CD4-positive, alpha-beta T cell (primary cell): ENCODE measurements at regions of chr12 and their contacts with region 1.

Region 1: GRCh38 chr12:93502802-93503623 is 35.7 kb downstream of the MRPL42 start:
- DNase-seq: peak; percentile 36 to 79 (median 59)
- ATAC-seq: peak; percentile 29
- H3K4me3 ChIP-seq: no peak overlapping the region
- H3K4me3 Mint-ChIP-seq: no peak overlapping the region
- H3K27ac ChIP-seq: no peak overlapping the region
- H3K27ac Mint-ChIP-seq: no peak overlapping the region
- H3K4me1 ChIP-seq: no peaks in the 10 kb centered on the region
- H3K4me1 Mint-ChIP-seq: no peaks in the 10 kb centered on the region
- H3K27me3 ChIP-seq: no peaks in the 10 kb centered on the region
- H3K27me3 Mint-ChIP-seq: no peaks in the 10 kb centered on the region
- CTCF ChIP-seq: peak; percentile 91

Region 2: GRCh38 chr12:92987362-92987761 is 515.7 kb before region 1 on chr12:
- CTCF ChIA-PET with region 1: no interaction called
- POLR2A ChIA-PET with region 1: no interaction called
- intact Hi-C with region 1: loop called in 1 of 2 experiments (anchors 5 kb)
- DNase-seq: peak in 4 of 14 experiments; percentile 13 to 73 (median 70)
- ATAC-seq: peak; percentile 81
- H3K4me3 ChIP-seq: no peak overlapping the region
- H3K4me3 Mint-ChIP-seq: peak overlapping the region; percentile 26
- H3K27ac ChIP-seq: no peak overlapping the region
- H3K27ac Mint-ChIP-seq: no peak overlapping the region
- H3K4me1 ChIP-seq: peaks cover 7% of the 10 kb centered on the region
- H3K4me1 Mint-ChIP-seq: peaks cover 12% of the 10 kb centered on the region
- H3K27me3 ChIP-seq: no peaks in the 10 kb centered on the region
- H3K27me3 Mint-ChIP-seq: no peaks in the 10 kb centered on the region
- CTCF ChIP-seq: peak; percentile 80

Region 3: DNA sequence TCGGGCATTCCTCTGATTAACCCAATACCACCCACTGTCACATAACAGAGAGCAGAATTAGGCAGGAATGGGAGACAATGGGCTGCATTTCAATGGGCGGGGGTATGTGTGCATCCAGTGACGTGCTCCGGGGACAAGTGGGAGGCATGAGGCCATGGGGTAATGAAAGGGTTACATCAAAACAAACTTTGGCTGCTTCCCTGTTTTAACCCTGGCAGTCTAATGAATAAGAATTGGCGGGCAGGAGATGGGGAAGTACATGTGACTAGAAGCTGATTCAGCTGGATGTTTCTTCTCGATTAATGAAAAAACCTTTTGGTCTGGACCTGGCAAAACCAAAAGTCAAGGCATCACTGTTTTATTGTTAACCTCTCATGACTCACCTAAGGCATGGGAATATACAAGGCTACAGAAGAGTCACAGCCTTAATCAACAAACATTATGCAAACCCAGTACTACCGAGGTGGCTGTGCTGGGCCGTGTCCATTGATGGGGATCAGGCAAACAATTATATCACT is 113.6 kb after region 1 on chr12:
- CTCF ChIA-PET with region 1: no interaction called
- POLR2A ChIA-PET with region 1: no interaction called
- intact Hi-C with region 1: no loop called
- DNase-seq: peak in 1 of 14 experiments; percentile 7
- ATAC-seq: no peak
- H3K4me3 ChIP-seq: no peak overlapping the region
- H3K4me3 Mint-ChIP-seq: no peak overlapping the region
- H3K27ac ChIP-seq: no peak overlapping the region
- H3K27ac Mint-ChIP-seq: no peak overlapping the region
- H3K4me1 ChIP-seq: no peaks in the 10 kb centered on the region
- H3K4me1 Mint-ChIP-seq: no peaks in the 10 kb centered on the region
- H3K27me3 ChIP-seq: peaks cover 0 to 5% of the 10 kb centered on the region in 2 experiments
- H3K27me3 Mint-ChIP-seq: no peaks in the 10 kb centered on the region
- CTCF ChIP-seq: no peak

Region 4: DNA sequence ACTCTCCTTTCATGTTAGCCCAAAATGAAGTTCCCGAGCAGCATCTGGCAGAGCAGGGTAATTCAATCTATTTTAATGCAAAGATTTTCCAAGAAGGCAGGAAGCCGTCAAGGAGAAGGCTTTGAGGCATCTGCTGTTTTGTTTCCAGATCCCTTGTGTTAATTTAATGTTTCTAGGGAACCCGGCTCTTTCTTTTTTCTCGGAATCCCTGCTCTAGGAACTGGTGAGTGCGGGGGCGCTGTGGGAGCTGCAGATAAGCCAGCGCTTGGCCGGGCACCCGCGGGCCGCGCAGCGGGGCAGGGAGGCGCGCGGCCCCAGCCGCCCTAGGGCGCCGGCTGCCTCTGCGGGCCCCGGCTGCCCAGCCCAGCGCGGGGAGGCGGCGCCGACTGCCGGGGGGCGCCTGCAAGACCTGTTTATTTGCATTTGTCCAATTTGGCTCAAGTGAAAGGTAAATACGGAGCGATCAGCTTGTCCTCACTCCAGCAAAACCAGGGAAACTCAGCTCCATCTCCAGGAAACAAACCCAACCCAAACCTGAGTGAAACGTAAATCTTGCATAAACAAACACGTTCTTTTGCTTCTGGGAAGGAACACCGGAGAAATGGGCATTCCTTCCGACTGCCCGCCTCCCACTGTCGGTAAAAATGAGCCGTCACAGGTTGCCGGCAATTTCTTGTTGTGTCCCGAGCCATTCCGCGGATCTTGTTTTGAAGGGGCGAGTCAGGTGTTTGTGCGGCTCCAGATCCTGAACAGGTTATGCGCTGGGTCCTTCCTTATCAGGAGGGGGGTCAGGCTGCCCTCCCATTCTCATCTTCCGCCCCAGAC is 239.3 kb after region 1 on chr12:
- CTCF ChIA-PET with region 1: interaction called, 3 read pairs
- POLR2A ChIA-PET with region 1: no interaction called
- intact Hi-C with region 1: loop called in 1 of 2 experiments (anchors 5 kb)
- DNase-seq: peak in 13 of 14 experiments; percentile 5 to 79 (median 41)
- ATAC-seq: peak; percentile 87
- H3K4me3 ChIP-seq: peak overlapping the region; percentile 75
- H3K4me3 Mint-ChIP-seq: peak overlapping the region; percentile 93
- H3K27ac ChIP-seq: peak overlapping the region in 1 of 2 donors; percentile 49
- H3K27ac Mint-ChIP-seq: peak overlapping the region; percentile 71
- H3K4me1 ChIP-seq: peaks cover 10% of the 10 kb centered on the region
- H3K4me1 Mint-ChIP-seq: peaks cover 33% of the 10 kb centered on the region
- H3K27me3 ChIP-seq: no peaks in the 10 kb centered on the region
- H3K27me3 Mint-ChIP-seq: no peaks in the 10 kb centered on the region
- CTCF ChIP-seq: no peak

Region 5: DNA sequence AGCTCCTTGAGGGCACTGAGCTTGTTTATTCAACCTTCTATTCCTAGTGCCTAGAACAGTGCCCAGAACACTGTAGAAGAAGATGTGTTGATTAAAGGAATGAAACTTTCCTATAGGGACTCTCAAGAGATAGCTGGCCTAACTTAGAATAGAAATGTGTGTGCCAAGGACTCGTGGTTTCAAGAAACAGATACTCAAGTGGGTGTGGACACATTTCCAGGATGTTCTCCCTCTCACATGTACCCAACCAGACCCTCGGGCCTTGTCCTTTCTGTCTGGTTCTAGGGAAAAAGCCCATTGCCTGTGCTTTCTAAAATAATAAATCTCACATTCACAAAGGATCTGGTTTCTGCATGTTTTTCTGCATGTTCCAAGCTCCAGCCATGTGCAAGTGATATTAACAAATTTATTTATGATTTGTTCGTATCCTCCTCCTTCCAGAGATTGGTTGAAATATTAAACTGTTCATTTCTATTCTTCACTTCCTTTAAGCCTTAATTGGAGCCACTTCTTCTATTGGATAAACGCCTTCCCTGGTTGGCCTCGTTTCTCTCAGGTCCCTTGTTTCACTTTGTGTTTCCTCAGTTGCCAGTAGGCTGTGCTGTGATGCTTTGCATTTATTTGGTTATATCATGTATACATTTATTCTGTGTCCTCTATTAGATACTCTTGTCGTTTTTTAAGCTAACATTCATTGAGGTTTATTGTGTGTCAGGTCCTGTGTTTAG is 263.9 kb after region 1 on chr12:
- CTCF ChIA-PET with region 1: interaction called, 10 read pairs
- POLR2A ChIA-PET with region 1: no interaction called
- intact Hi-C with region 1: loop called in 1 of 2 experiments (anchors 2 kb)
- DNase-seq: peak in 9 of 14 experiments; percentile 9 to 68 (median 23)
- ATAC-seq: peak; percentile 63
- H3K4me3 ChIP-seq: no peak overlapping the region
- H3K4me3 Mint-ChIP-seq: no peak overlapping the region
- H3K27ac ChIP-seq: no peak overlapping the region
- H3K27ac Mint-ChIP-seq: no peak overlapping the region
- H3K4me1 ChIP-seq: peaks cover 2% of the 10 kb centered on the region
- H3K4me1 Mint-ChIP-seq: peaks cover 27% of the 10 kb centered on the region
- H3K27me3 ChIP-seq: no peaks in the 10 kb centered on the region
- H3K27me3 Mint-ChIP-seq: no peaks in the 10 kb centered on the region
- CTCF ChIP-seq: peak; percentile 26

Region 6: DNA sequence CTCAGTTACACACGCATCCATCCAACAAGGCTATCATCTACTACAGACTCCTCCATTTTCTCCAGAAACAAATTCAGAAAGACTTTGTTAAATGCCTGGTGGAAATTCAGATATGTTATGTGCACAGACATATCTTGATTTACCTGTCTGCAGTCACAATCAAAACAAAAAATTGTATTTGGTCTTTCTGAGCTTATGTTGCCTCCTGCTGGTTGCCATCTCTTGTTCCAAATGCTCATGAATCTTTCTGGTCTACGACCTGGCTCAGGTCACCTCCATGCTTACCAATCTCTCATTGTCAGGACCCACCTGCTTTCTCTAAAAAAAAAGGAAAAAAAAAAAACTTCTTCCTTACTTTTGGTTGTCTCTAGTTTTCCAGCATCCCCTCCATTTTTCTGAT is 476.2 kb after region 1 on chr12:
- CTCF ChIA-PET with region 1: no interaction called
- POLR2A ChIA-PET with region 1: no interaction called
- intact Hi-C with region 1: loop called (anchors 2 to 5 kb)
- DNase-seq: peak in 7 of 14 experiments; percentile 3 to 56 (median 32)
- ATAC-seq: no peak
- H3K4me3 ChIP-seq: no peak overlapping the region
- H3K4me3 Mint-ChIP-seq: no peak overlapping the region
- H3K27ac ChIP-seq: no peak overlapping the region
- H3K27ac Mint-ChIP-seq: no peak overlapping the region
- H3K4me1 ChIP-seq: no peaks in the 10 kb centered on the region
- H3K4me1 Mint-ChIP-seq: peaks cover 21% of the 10 kb centered on the region
- H3K27me3 ChIP-seq: no peaks in the 10 kb centered on the region
- H3K27me3 Mint-ChIP-seq: no peaks in the 10 kb centered on the region
- CTCF ChIP-seq: peak; percentile 13

Region 7: GRCh38 chr12:94532490-94533422 is 1029.7 kb after region 1 on chr12:
- CTCF ChIA-PET with region 1: interaction called, 3 read pairs
- POLR2A ChIA-PET with region 1: no interaction called
- intact Hi-C with region 1: loop called (anchors 2 to 5 kb)
- DNase-seq: peak; percentile 41 to 79 (median 60)
- ATAC-seq: peak; percentile 60
- H3K4me3 ChIP-seq: no peak overlapping the region
- H3K4me3 Mint-ChIP-seq: no peak overlapping the region
- H3K27ac ChIP-seq: no peak overlapping the region
- H3K27ac Mint-ChIP-seq: no peak overlapping the region
- H3K4me1 ChIP-seq: peaks cover 6% of the 10 kb centered on the region
- H3K4me1 Mint-ChIP-seq: no peaks in the 10 kb centered on the region
- H3K27me3 ChIP-seq: no peaks in the 10 kb centered on the region
- H3K27me3 Mint-ChIP-seq: peaks cover 11% of the 10 kb centered on the region
- CTCF ChIP-seq: peak; percentile 69